Activated CD4-positive, alpha-beta memory T cell treated with anti-CD3 and anti-CD28 coated beads for 36 hours (primary cell): ENCODE measurements at regions of chr1 and their contacts with region 1.

Region 1: DNA sequence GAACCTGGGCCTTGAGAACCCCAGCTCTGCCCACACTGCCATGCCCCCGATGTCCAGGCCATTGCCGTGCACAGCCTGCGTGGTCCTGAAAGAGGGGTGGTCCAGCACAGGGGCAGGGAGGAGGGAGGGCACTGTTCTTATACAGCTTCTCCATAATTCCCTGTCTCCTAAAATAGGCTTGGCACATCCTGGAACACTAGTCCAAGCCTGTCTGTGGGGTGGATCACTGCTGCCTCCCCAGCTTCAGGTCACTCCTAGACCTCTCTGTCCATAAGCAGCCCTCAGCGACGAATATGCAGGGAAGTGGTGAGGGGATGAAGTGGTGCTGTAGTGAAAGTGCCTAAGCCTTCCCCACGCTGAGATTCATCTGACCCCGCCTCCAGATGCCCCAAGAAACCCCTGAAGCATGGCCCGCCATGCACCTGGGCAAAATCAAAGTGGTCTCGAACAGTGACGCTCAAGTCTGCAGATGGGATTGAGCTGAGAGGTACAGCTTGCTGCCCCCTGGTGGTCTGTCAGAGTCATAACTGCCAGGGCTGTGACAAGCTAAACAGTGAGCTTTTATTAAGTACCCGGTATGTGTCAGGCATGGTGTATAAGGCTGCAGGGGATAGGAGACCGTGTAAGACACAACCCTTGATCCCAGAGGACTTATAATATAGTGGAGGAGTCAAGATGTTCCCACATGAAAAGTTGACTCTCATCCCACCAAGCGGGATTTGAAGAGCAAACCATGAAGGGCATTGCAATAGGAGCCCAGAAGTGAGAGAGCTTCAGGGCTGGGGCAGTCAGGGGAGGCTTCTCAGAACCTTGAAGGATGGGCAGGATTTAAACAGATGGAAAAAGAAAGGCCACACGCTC is 66.6 kb downstream of the FAM163A start:
- DNase-seq: peak; percentile 75
- H3K4me3 Mint-ChIP-seq: no peak overlapping the region
- H3K27ac Mint-ChIP-seq: no peak overlapping the region
- H3K4me1 Mint-ChIP-seq: peaks cover 10% of the 10 kb centered on the region
- H3K27me3 Mint-ChIP-seq: no peaks in the 10 kb centered on the region

Region 2: DNA sequence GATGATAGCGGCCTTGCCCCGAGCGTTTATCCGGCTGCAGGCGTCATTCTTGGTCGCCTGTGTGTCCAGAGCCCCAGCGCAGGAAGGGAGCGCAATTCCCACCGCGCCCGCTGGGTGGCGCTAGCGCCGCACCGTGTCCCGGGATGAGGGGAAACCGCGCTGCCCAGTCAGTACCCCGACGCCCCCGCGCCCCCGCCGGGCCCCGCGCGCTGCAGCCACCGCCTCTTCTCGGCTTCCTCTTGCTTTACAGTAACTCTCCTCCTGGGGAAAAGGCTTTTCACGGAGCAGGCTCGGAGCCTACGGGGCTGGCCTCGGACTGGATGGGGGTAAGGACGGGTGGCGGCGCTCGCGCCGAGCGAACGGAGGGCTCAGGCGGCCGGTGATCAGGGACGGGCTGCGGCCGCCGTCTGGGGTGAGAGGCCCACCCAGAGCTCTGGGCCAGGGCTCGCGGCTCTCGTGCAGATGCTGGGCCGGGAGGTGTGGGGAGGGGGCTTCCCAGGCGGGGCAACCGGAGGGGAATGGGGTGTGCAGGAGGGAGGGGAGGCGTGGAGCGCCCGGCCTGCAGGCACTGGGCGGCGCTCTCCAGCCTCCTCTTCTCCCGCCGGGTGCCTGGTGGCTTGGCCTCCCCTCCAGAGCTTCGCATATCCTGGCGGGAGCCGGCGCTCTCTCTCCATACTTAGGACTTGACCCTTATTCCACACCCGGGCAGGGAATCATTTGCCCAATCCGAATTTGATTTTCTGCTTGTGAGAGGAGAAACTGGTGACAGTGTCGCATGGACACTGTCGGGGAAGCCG is 1267.0 kb before region 1 on chr1:
- CTCF ChIA-PET with region 1: no interaction called
- POLR2A ChIA-PET with region 1: no interaction called
- intact Hi-C with region 1: loop called (anchors 2 kb)
- DNase-seq: peak; percentile 94
- H3K4me3 Mint-ChIP-seq: peak overlapping the region; percentile 85
- H3K27ac Mint-ChIP-seq: peak overlapping the region; percentile 79
- H3K4me1 Mint-ChIP-seq: peaks cover 6% of the 10 kb centered on the region
- H3K27me3 Mint-ChIP-seq: no peaks in the 10 kb centered on the region

Region 3: DNA sequence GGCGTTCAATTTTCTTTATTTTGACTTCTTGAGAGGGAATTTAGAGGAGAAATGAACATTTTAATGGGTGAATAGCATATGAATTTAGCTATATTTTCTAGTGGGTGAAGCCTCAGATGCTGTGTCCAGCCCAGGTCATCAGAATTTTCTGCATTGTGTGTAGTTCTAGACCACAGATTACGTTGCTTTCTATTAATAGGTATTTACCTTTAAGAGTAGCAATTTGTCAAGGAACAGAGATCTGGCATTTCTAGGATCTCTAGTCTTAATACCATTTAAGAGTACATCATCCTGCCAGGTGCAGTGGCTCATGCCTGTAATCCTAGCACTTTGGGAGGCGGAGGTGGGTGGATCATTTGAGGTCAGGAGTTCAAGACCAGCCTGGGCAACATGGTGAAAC is 197.4 kb before region 1 on chr1:
- CTCF ChIA-PET with region 1: no interaction called
- POLR2A ChIA-PET with region 1: no interaction called
- intact Hi-C with region 1: no loop called
- DNase-seq: no peak
- H3K4me3 Mint-ChIP-seq: no peak overlapping the region
- H3K27ac Mint-ChIP-seq: no peak overlapping the region
- H3K4me1 Mint-ChIP-seq: no peaks in the 10 kb centered on the region
- H3K27me3 Mint-ChIP-seq: peaks cover 12% of the 10 kb centered on the region

Region 4: GRCh38 chr1:179728271-179728670 is 81.5 kb before region 1 on chr1:
- CTCF ChIA-PET with region 1: interaction called, 26 read pairs
- POLR2A ChIA-PET with region 1: no interaction called
- intact Hi-C with region 1: no loop called
- DNase-seq: no peak
- H3K4me3 Mint-ChIP-seq: no peak overlapping the region
- H3K27ac Mint-ChIP-seq: no peak overlapping the region
- H3K4me1 Mint-ChIP-seq: no peaks in the 10 kb centered on the region
- H3K27me3 Mint-ChIP-seq: peaks cover 4% of the 10 kb centered on the region

Region 5: DNA sequence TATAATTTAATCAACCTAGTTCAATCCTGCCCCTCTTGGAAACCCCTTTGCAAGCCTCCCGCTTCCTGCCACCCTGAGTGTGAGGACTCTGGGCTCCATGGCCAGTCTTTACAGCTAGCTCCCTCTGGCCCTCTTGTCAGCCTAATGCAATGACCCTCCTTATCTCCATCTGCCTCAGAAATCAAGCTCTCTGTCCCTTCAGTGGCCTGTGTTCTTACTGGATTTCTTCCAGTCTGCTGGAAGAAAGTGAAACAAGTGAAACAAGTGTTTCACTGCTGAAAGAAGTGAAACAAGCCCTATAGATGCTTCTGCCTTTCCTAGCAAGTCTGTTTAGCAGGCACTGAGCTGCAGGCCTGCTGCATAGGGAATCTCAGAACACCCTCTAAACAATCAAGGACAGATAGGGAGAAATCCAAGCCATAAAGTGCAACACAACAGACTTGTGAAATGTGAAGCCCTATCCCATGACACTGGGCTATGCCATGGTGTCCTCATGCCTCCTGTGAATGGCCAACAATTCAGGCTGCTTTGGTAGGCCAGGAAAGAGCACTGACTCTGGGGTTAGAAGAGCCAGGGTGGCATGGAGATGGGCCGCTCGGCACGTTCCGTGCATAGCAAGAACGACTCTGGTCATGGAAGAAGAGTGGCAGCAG is 10.7 kb before region 1 on chr1:
- CTCF ChIA-PET with region 1: interaction called, 27 read pairs
- POLR2A ChIA-PET with region 1: no interaction called
- intact Hi-C with region 1: no loop called
- DNase-seq: no peak
- H3K4me3 Mint-ChIP-seq: no peak overlapping the region
- H3K27ac Mint-ChIP-seq: no peak overlapping the region
- H3K4me1 Mint-ChIP-seq: no peaks in the 10 kb centered on the region
- H3K27me3 Mint-ChIP-seq: no peaks in the 10 kb centered on the region

Region 6: DNA sequence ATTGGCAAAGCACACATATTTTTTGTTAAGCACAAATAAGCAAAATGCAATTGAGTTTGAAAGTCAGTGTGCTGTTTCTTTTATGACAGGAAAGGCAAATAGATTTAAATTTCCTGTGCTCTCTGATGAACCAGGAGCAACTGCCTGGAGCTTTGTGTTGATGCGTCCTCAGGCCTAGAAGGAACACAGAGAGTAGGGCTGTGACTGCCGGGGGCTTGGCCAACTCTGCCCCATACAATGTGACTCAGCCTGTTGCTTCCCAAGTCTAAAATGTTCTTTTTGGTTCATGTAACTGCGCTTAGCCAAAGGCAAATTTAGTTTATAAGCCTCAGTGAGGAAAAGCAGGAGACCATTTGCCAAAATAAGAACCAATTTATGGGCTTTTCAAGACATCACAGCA is 30.4 kb after region 1 on chr1:
- CTCF ChIA-PET with region 1: interaction called, 11 read pairs
- POLR2A ChIA-PET with region 1: no interaction called
- intact Hi-C with region 1: no loop called
- DNase-seq: no peak
- H3K4me3 Mint-ChIP-seq: no peak overlapping the region
- H3K27ac Mint-ChIP-seq: no peak overlapping the region
- H3K4me1 Mint-ChIP-seq: no peaks in the 10 kb centered on the region
- H3K27me3 Mint-ChIP-seq: no peaks in the 10 kb centered on the region

Region 7: GRCh38 chr1:179954493-179955297 is 145.0 kb after region 1 on chr1 and contains the start of gene CEP350:
- CTCF ChIA-PET with region 1: interaction called, 11 read pairs
- POLR2A ChIA-PET with region 1: no interaction called
- intact Hi-C with region 1: no loop called
- DNase-seq: peak; percentile 99
- H3K4me3 Mint-ChIP-seq: peak within 1 kb of the TSS; percentile 80
- H3K27ac Mint-ChIP-seq: peak within 1 kb of the TSS; percentile 95
- H3K4me1 Mint-ChIP-seq: peaks cover 42% of the 10 kb centered on the region
- H3K27me3 Mint-ChIP-seq: no peaks in the 10 kb centered on the region
- total RNA-seq, gene CEP350: 31.7 to 34.2 TPM

Region 8: DNA sequence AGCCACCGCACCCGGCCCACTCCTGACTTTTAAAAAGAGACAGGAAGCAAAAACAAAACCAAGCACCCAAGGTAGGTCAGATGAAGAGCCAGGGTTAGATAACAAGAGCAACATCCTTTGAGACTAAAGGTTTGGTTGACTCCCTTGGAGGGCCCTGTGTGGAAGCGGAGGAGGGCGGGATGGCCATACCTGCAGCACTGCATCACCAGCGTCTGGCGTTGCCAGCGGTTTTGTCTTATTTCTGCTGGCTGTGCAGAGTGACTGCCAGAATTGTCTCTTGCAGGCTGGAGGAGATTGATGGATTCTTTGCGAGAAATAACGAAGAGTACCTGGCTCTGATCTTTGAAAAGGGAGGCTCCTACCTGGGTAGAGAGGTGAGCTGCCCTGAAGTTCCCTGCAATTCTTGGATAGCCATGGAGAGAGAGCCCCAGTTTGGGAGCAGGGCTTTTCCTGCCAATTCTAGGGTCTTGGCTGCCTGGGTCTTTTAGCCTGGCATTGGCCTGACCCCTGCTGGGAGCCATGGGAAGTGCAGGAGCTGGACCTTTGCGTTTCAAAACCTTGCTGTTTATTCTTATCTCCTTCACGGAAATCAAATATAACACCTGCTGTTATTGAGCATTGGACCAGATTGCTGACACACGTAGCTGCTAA is 368.9 kb after region 1 on chr1:
- CTCF ChIA-PET with region 1: interaction called, 20 read pairs
- POLR2A ChIA-PET with region 1: no interaction called
- intact Hi-C with region 1: no loop called
- DNase-seq: peak; percentile 74
- H3K4me3 Mint-ChIP-seq: no peak overlapping the region
- H3K27ac Mint-ChIP-seq: no peak overlapping the region
- H3K4me1 Mint-ChIP-seq: no peaks in the 10 kb centered on the region
- H3K27me3 Mint-ChIP-seq: no peaks in the 10 kb centered on the region